H1 (cell line): ENCODE measurements at regions of chr2 and their contacts with region 1.

Region 1: DNA sequence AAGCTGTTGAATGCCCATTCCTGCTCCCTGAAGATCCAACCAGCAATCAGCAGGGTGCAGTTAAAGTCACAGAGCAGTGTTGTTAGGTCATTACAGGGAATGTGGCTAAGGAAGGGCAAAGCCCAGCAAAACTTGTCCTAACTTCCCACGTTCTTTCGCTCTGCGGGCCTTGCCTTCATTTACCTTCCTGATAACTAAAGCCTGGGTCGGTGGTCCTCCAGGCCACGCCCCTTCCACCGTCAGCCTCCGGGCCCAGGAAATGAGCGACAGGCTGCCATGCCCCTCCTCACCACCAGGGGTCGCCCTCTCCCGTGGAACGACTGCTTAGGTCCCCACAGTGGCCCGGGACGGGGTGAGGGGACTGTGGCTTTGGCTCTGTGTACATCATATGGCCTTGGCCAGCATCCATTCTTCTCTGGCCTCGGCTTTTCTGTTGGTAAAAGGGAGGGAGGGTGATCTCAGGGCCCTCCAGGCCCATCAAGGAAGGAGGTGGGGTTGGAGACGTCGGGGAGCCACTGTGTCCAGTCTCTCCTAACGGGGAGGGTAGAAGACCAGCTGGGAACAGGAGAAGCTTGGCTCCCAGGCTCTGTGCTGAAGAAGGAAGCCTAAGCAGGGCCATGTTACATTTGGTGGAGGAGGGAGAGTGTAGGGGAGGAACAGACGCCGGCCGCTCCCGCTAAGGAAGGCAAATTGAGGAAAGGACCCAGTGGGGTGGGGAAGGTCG is 2.2 kb downstream of the SH2D6 start:
- DNase-seq: peak in 1 of 2 experiments; percentile 100
- H3K4me3 ChIP-seq: no peak overlapping the region
- H3K27ac ChIP-seq: no peak overlapping the region
- H3K4me1 ChIP-seq: peaks cover 0 to 20% (median 13%) of the 10 kb centered on the region in 4 experiments; a peak in 6 of 7 replicates
- H3K27me3 ChIP-seq: no peaks in the 10 kb centered on the region; a peak in 1 of 7 replicates
- CTCF ChIP-seq: peak; percentile 96 to 100 (median 98)
- EP300 ChIP-seq: peak in 1 of 2 experiments; percentile 24; a peak in 1 of 3 replicates
- POLR2A ChIP-seq: no peak
- RAD21 ChIP-seq: peak; percentile 99 to 100

Region 2: GRCh38 chr2:85188852-85189587 is 231.7 kb before region 1 on chr2:
- CTCF ChIA-PET with region 1: no interaction called
- POLR2A ChIA-PET with region 1: no interaction called
- DNase-seq: no peak
- H3K4me3 ChIP-seq: no peak overlapping the region
- H3K27ac ChIP-seq: no peak overlapping the region
- H3K4me1 ChIP-seq: peaks cover 2 to 9% (median 6%) of the 10 kb centered on the region in 4 experiments; a peak in 5 of 7 replicates
- H3K27me3 ChIP-seq: no peaks in the 10 kb centered on the region
- CTCF ChIP-seq: peak; percentile 14 to 30 (median 24)
- EP300 ChIP-seq: no peak
- POLR2A ChIP-seq: no peak
- RAD21 ChIP-seq: peak; percentile 16 to 35; a peak in 2 of 4 replicates

Region 3: DNA sequence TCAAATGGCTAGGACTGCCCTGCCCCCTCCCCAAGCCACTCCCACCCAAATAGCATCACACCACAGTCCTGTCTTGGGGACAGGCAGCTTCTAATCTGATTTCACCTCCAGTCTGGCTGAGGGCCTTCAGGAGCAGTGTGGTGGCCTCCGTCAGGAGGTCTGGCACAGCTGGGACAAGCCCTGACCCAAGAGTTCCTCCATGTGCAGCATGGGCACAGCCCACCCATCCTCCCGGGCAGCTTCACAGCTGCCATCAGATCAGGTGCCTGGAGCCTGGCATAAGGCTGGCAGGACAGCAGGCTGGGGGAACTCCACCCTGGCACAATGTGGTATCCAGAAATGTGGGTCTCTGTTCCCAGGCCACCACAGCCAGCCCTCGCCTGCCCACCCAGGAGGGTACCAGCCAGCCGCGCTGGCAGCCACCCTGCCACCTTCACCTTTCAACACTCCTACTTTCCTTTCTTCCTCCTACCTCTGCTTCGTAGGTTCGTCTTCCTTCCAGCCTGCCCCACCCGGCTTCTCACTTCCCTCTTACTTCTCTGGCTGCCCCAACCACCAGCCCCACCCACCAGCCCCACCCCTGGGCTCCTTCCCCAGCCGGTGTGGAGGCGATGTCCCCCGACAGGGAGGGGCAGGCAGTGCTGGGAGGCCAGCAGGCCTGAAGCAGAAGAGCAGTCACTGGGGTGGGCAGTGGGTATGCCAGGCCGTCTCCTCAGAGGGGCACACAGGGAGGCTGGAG is 10.7 kb before region 1 on chr2 and contains the start of gene CAPG:
- CTCF ChIA-PET with region 1: interaction called, 16 read pairs
- POLR2A ChIA-PET with region 1: interaction called, 4 read pairs
- DNase-seq: peak in 1 of 2 experiments; percentile 53
- H3K4me3 ChIP-seq: peak within 1 kb of the TSS in 1 of 4 experiments; percentile 28; a peak in 1 of 8 replicates
- H3K27ac ChIP-seq: no peak within 1 kb of the TSS
- H3K4me1 ChIP-seq: peaks cover 5 to 19% (median 15%) of the 10 kb centered on the region in 4 experiments
- H3K27me3 ChIP-seq: peaks cover 0 to 3% (median 1%) of the 10 kb centered on the region in 4 experiments; a peak in 1 of 7 replicates
- CTCF ChIP-seq: no peak
- EP300 ChIP-seq: no peak
- POLR2A ChIP-seq: no peak
- RAD21 ChIP-seq: no peak
- total RNA-seq, gene CAPG: 78.6 and 80.5 TPM in 2 replicates

Region 4: DNA sequence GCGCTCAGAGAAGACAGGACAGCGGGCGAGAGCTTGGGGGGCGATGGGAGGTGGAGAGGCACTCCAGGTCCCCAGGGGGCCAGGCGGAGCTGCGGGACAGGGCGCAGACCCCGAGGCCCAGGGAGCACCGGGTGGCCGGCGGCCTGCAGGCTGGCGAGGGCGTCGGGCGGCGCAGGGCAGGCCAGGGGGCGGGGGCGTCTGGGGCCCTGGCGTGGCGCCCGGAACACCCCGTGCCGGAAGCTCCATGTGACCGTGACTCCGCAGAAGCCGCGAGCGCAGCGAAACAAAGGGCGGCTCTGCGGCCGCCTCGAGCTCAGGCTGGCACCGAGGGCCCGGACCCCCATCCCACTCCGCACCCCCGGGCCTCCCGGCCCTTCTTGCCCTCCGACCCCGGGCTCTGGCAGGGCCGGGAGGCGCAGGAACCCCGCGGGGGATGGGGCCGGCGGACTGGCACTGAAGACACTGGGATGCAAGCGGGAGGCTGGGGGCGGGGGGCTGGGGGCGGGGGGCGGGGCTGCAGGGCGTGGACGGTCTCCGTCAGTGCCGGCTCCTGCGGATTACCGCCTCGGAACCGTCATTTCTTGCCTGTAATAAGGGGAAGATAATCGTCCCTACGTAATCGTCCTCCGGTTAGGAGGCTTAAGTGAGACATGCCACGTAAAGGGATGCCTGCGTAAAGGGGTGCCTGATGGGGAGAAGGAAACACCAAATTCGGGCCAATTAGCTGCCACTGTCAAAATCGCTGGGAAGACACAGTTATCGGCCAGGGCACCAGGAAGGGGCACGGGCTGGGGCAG is 17.0 kb after region 1 on chr2:
- CTCF ChIA-PET with region 1: interaction called, 21 read pairs
- POLR2A ChIA-PET with region 1: interaction called, 47 read pairs
- DNase-seq: peak in 1 of 2 experiments; percentile 82
- H3K4me3 ChIP-seq: peak overlapping the region in 3 of 4 experiments; percentile 23 to 56 (median 35); a peak in 7 of 8 replicates
- H3K27ac ChIP-seq: peak overlapping the region; percentile 69; the same call in 1 of the 2 replicates
- H3K4me1 ChIP-seq: peaks cover 7 to 39% (median 32%) of the 10 kb centered on the region in 4 experiments
- H3K27me3 ChIP-seq: peaks cover 0 to 14% (median 5%) of the 10 kb centered on the region in 4 experiments; a peak in 4 of 7 replicates
- CTCF ChIP-seq: no peak
- EP300 ChIP-seq: peak in 1 of 2 experiments; percentile 39; a peak in 1 of 3 replicates
- POLR2A ChIP-seq: peak in 1 of 2 experiments; percentile 80; a peak in 2 of 3 replicates
- RAD21 ChIP-seq: no peak

Region 5: DNA sequence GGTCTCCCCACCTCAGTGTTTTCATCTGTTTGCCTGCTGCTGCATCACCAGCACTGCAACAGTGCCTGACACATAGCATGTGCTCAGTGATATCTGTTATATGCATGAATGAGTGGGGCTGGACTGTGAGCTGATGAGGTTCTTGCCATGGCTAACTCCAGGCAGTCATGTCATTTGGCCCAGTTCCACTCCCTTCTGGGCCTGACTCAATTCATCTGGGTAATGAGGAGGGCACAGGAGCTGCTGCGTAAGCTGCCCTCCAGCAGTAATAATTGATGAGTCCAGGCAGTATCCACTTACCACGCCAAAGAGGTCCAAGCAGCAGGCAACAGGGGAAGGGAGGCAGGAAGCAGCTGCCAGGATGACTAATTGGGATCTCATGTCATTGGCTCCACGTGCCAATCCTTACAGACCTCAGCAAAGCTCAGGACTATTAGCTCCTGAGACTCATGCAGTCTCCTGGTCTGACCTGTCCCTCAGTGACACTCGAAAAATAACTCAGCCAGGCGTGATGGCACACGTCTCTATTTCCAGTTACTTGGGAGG is 84.2 kb after region 1 on chr2:
- CTCF ChIA-PET with region 1: interaction called, 15 read pairs
- POLR2A ChIA-PET with region 1: interaction called, 3 read pairs
- DNase-seq: no peak
- H3K4me3 ChIP-seq: no peak overlapping the region
- H3K27ac ChIP-seq: no peak overlapping the region
- H3K4me1 ChIP-seq: no peaks in the 10 kb centered on the region; a peak in 2 of 7 replicates
- H3K27me3 ChIP-seq: no peaks in the 10 kb centered on the region
- CTCF ChIP-seq: no peak
- EP300 ChIP-seq: no peak
- POLR2A ChIP-seq: no peak
- RAD21 ChIP-seq: no peak

Region 6: GRCh38 chr2:85524336-85524933 is 103.7 kb after region 1 on chr2:
- CTCF ChIA-PET with region 1: interaction called, 17 read pairs
- POLR2A ChIA-PET with region 1: interaction called, 1,889 read pairs
- DNase-seq: no peak
- H3K4me3 ChIP-seq: no peak overlapping the region
- H3K27ac ChIP-seq: no peak overlapping the region
- H3K4me1 ChIP-seq: peaks cover 5 to 12% (median 6%) of the 10 kb centered on the region in 4 experiments; a peak in 5 of 7 replicates
- H3K27me3 ChIP-seq: no peaks in the 10 kb centered on the region; a peak in 1 of 7 replicates
- CTCF ChIP-seq: no peak
- EP300 ChIP-seq: no peak
- POLR2A ChIP-seq: no peak
- RAD21 ChIP-seq: no peak

Region 7: GRCh38 chr2:85561317-85561979 is 140.8 kb after region 1 on chr2 and contains the start of gene GGCX:
- CTCF ChIA-PET with region 1: interaction called, 259 read pairs
- POLR2A ChIA-PET with region 1: interaction called, 1,889 read pairs
- DNase-seq: peak; percentile 88 to 97
- H3K4me3 ChIP-seq: peak within 1 kb of the TSS; percentile 68 to 90 (median 88)
- H3K27ac ChIP-seq: peak within 1 kb of the TSS; percentile 92
- H3K4me1 ChIP-seq: no peaks in the 10 kb centered on the region
- H3K27me3 ChIP-seq: no peaks in the 10 kb centered on the region
- CTCF ChIP-seq: no peak
- EP300 ChIP-seq: no peak
- POLR2A ChIP-seq: peak; percentile 95 to 97
- RAD21 ChIP-seq: peak in 1 of 2 experiments; percentile 11; a peak in 1 of 4 replicates
- total RNA-seq, gene GGCX: 33.8 and 36.1 TPM in 2 replicates